Endothelial cell of umbilical vein (primary cell): ENCODE measurements at regions of chr4 and their contacts with region 1.

Region 1: DNA sequence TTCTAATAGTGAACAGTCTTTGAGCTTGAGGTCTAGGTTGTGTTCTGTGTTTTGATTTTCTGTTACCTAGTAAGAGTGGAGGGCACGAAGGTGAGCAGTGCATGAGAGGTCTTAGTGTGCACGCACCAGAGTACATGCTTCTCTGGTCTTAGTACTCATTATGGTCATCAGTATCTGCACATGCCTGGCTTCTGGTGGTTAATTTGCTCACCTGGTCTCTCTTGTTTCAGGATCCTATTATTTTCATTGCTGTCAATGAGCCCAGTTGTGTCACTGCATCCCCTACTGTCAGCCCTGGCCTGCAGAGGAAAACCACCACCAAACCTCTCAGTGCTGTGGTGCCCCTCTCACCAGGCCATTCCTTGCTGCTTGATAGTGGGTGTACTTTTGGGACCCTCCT is 54.8 kb downstream of the NSUN7 start:
- DNase-seq: no peak
- H3K4me3 ChIP-seq: no peak overlapping the region
- H3K27ac ChIP-seq: no peak overlapping the region
- H3K4me1 ChIP-seq: no peaks in the 10 kb centered on the region
- H3K27me3 ChIP-seq: no peaks in the 10 kb centered on the region
- CTCF ChIP-seq: no peak
- POLR2A ChIP-seq: no peak

Region 2: GRCh38 chr4:39597695-39598381 is 1206.8 kb before region 1 on chr4:
- CTCF ChIA-PET with region 1: no interaction called
- POLR2A ChIA-PET with region 1: interaction called, 10 read pairs
- dilution Hi-C with region 1: no loop called
- intact Hi-C with region 1: no loop called
- DNase-seq: no peak
- H3K4me3 ChIP-seq: no peak overlapping the region
- H3K27ac ChIP-seq: no peak overlapping the region
- H3K4me1 ChIP-seq: no peaks in the 10 kb centered on the region
- H3K27me3 ChIP-seq: no peaks in the 10 kb centered on the region
- CTCF ChIP-seq: no peak
- POLR2A ChIP-seq: no peak

Region 3: DNA sequence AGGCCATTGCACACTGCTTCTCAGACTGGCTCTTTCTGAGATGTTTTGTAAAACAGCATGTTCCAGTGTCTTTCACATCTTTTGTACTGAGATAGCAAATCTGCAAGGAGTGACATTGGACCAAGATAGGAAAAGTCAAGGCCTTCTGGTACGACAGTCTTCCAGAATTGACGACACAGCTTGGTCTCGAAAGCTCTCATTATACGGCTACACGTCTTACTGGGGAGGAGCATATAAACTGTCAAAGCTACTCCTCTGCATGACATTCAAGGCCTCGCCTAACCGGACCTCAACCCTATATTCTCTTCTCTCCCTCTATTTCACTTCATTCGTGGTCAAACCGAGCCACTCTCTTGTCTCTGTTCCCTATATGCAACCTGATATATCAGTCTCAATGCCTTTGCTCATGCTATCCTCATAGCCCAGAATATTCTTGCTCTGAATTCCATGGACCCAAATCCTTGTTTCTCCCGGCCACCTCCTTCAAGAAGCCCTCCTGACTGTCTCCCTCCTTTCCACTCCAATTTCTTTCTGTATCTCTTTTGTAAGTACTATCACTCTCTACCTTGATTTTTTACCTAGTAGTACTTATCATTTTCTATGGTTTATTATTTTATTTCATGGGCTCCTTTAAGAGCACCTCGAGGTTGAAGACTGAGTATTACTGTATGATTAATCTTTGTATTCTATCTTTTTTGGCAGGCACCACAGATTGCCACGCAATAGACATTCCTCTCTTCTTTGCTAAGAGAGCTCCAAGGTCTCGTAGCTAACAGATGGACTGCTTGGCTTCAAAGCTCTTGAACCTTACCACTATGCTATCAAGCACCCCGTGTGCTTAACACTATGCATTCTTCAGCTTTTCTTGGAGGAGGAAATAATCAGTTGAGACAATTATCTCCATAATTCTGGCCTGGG is 210.1 kb before region 1 on chr4:
- CTCF ChIA-PET with region 1: no interaction called
- POLR2A ChIA-PET with region 1: no interaction called
- dilution Hi-C with region 1: no loop called
- intact Hi-C with region 1: no loop called
- DNase-seq: no peak
- H3K4me3 ChIP-seq: no peak overlapping the region
- H3K27ac ChIP-seq: no peak overlapping the region
- H3K4me1 ChIP-seq: no peaks in the 10 kb centered on the region
- H3K27me3 ChIP-seq: no peaks in the 10 kb centered on the region
- CTCF ChIP-seq: no peak
- POLR2A ChIP-seq: no peak

Region 4: GRCh38 chr4:40940317-40940741 is 135.7 kb after region 1 on chr4:
- CTCF ChIA-PET with region 1: no interaction called
- POLR2A ChIA-PET with region 1: no interaction called
- dilution Hi-C with region 1: no loop called
- intact Hi-C with region 1: no loop called
- DNase-seq: no peak
- H3K4me3 ChIP-seq: no peak overlapping the region
- H3K27ac ChIP-seq: no peak overlapping the region
- H3K4me1 ChIP-seq: peaks cover 6% of the 10 kb centered on the region
- H3K27me3 ChIP-seq: no peaks in the 10 kb centered on the region
- CTCF ChIP-seq: no peak
- POLR2A ChIP-seq: no peak